H1 (cell line): ENCODE measurements at regions of chr6 and their contacts with region 1.

Region 1: DNA sequence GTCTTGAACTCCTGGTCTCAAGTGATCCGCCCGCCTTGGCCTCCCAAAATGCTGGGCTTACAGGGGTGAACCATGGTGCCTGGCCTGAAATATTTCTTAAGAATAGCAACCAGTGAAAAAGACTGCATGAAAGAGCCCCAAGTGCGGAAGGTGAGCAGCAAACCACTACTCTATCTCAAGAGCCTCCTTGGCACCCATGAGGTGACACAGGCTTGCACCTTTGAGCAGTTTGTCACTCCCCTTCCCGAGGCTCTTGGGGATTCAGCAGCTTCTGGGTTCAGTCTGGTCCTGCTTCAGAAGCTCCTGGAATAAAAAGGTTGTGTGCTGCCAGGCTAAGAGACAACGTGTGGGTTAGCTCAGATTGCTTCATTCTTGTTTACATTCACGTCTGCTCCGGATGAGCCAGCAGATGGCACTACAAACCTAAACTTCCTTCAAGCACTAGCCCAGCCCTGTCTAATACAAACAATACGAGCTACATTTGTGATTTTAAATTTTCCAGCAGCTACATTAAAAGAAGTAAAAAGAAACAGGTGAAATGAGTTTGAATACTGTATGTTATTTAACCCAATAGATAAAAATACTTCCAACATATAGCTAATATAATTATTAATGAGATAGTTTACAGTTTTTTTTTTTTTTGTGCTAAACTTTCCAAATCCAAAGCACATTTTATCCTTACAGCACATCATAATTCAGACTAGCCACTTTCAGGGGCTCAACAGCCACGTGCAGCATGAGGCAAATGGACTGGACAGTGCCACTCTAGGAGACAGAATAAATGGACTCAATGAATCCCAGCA is 46.2 kb downstream of the GJA10 start:
- DNase-seq: peak in 1 of 2 experiments; percentile 34
- H3K4me3 ChIP-seq: no peak overlapping the region
- H3K27ac ChIP-seq: no peak overlapping the region
- H3K4me1 ChIP-seq: no peaks in the 10 kb centered on the region; a peak in 2 of 7 replicates
- H3K27me3 ChIP-seq: no peaks in the 10 kb centered on the region
- CTCF ChIP-seq: peak; percentile 26 to 87 (median 81)
- EP300 ChIP-seq: no peak
- POLR2A ChIP-seq: no peak
- RAD21 ChIP-seq: peak; percentile 93 to 95

Region 2: DNA sequence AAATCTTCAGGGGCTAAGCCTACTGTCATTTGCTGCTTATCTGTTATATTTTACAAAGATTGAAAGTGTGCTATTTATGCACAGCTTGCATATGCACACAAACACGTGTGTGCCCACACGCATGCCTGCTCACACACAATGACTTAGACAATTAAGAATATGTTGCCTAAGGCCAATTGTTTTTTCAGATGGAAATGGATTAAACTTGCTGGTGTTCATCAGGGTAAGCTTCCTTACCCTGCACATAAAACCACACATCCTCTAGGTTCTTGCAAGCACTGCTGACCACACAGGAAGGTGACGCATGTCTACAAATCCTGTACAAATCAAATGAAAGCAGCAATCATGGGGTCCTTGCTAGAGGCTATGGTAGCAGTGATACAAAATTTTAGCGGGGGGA is 12.3 kb after region 1 on chr6:
- CTCF ChIA-PET with region 1: interaction called, 30 read pairs
- POLR2A ChIA-PET with region 1: no interaction called
- DNase-seq: no peak
- H3K4me3 ChIP-seq: no peak overlapping the region
- H3K27ac ChIP-seq: no peak overlapping the region
- H3K4me1 ChIP-seq: no peaks in the 10 kb centered on the region
- H3K27me3 ChIP-seq: no peaks in the 10 kb centered on the region
- CTCF ChIP-seq: no peak
- EP300 ChIP-seq: no peak
- POLR2A ChIP-seq: no peak
- RAD21 ChIP-seq: no peak

Region 3: GRCh38 chr6:89966228-89966544 is 25.8 kb after region 1 on chr6:
- CTCF ChIA-PET with region 1: interaction called, 12 read pairs
- POLR2A ChIA-PET with region 1: no interaction called
- DNase-seq: no peak
- H3K4me3 ChIP-seq: no peak overlapping the region
- H3K27ac ChIP-seq: no peak overlapping the region
- H3K4me1 ChIP-seq: no peaks in the 10 kb centered on the region
- H3K27me3 ChIP-seq: no peaks in the 10 kb centered on the region
- CTCF ChIP-seq: no peak
- EP300 ChIP-seq: no peak
- POLR2A ChIP-seq: no peak
- RAD21 ChIP-seq: no peak

Region 4: GRCh38 chr6:90021711-90022110 is 81.3 kb after region 1 on chr6:
- CTCF ChIA-PET with region 1: no interaction called
- POLR2A ChIA-PET with region 1: no interaction called
- DNase-seq: no peak
- H3K4me3 ChIP-seq: no peak overlapping the region
- H3K27ac ChIP-seq: no peak overlapping the region
- H3K4me1 ChIP-seq: no peaks in the 10 kb centered on the region
- H3K27me3 ChIP-seq: no peaks in the 10 kb centered on the region
- CTCF ChIP-seq: no peak
- EP300 ChIP-seq: no peak
- POLR2A ChIP-seq: no peak
- RAD21 ChIP-seq: no peak

Region 5: DNA sequence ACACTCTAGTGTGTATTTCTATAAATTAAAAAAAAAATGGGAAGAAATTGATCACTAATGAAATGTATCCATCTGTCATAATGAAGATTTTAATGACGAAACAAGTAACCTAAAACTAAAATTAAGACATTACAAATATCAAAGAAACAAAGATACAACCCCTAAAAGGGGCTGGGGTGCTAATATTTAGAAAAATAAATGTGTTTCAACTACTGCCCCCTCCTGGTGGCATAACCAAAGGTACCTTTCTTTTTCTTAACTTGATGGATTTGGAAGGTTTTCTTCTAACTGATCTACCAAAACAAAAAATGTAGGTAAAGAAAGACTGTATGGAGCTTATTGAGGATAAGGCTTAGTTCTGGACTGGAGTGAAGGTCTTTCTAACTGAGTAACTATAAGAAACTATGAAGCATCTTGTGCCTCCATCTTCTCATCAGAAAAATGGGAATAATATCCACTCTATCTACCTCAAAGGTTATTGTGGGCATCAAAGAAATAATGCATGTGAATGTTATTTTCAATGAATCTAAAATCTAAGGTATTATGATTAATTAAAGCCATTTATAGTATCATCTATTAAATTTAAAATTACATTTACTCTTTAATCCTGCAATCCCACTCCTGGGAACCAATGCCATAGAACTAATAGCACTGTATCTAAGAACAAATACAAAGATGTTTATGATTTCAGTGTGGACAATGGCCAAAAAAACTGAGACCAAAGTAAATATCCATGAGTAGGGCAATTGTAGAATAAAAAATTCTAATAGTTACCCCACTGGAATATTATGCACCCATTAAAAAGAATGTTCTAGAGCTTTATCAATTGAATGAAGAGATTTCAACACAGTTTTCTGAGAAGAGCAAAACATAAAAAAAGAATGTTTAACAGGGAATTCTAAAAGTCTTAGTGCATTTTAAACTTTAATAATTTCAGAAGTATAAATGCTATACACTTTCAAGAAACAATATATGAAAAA is 239.1 kb after region 1 on chr6:
- CTCF ChIA-PET with region 1: interaction called, 18 read pairs
- POLR2A ChIA-PET with region 1: no interaction called
- DNase-seq: no peak
- H3K4me3 ChIP-seq: no peak overlapping the region
- H3K27ac ChIP-seq: no peak overlapping the region
- H3K4me1 ChIP-seq: no peaks in the 10 kb centered on the region
- H3K27me3 ChIP-seq: no peaks in the 10 kb centered on the region; a peak in 1 of 7 replicates
- CTCF ChIP-seq: peak in 2 of 3 experiments; percentile 21 to 44; a peak in 2 of 4 replicates
- EP300 ChIP-seq: no peak
- POLR2A ChIP-seq: no peak
- RAD21 ChIP-seq: peak; percentile 28 to 37; a peak in 3 of 4 replicates

Region 6: GRCh38 chr6:90493332-90493731 is 552.9 kb after region 1 on chr6:
- CTCF ChIA-PET with region 1: interaction called, 10 read pairs
- POLR2A ChIA-PET with region 1: no interaction called
- DNase-seq: no peak
- H3K4me3 ChIP-seq: no peak overlapping the region
- H3K27ac ChIP-seq: no peak overlapping the region
- H3K4me1 ChIP-seq: peaks cover 7 to 35% (median 15%) of the 10 kb centered on the region in 4 experiments
- H3K27me3 ChIP-seq: no peaks in the 10 kb centered on the region
- CTCF ChIP-seq: no peak
- EP300 ChIP-seq: no peak
- POLR2A ChIP-seq: no peak
- RAD21 ChIP-seq: no peak